ENCODE measurements at regions of chr7 and their contacts with region 1.

Region 1: DNA sequence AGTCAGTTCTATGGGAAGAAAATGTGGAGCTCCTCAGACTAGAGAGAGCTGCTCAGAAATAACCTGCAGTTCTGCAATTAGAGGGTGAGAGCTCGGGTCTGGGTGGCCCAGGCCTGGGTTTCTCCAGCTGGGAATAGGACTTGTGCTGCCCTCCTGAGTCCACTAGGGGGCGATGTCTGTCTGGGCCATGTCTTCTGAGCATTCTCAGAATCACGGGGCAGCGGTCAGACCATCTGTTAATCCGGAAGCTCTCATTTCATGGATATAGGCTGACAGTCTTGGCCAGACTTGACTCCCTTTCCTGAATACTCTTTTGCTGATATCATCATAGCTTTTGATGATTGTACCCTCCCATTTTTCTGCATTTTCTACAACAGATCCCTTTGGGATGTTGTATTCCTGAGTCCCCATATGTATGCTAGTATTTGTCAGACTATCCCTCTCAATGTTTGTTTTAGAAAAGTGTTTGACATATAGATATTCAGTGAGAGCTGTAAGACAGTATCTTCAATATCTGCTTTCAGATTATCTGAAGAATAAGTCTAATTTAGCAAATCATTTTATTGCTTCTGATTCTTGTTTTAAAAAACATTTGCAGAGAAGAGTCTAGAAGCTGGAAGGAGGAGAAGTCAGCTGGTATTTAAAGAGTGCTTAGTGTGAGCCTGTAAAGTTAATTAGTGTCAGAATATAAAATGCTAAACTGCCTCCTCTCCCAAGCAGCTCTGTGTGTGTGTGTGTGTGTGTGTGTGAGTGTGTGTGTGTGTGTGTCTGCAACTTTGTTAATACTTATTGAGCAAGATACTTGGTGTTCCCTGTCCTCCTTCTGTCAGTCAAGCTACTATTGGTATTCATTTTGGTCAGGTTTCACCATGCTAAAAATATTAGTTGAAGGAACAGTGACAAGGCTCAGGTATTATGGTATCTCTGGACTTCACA is 38.0 kb downstream of the STARD3NL start:
- DNase-seq: peak; percentile 75
- H3K4me3 Mint-ChIP-seq: no peak overlapping the region
- H3K27ac Mint-ChIP-seq: no peak overlapping the region
- H3K4me1 Mint-ChIP-seq: no peaks in the 10 kb centered on the region
- H3K27me3 Mint-ChIP-seq: no peaks in the 10 kb centered on the region
- CTCF ChIP-seq: peak; percentile 92

Region 2: GRCh38 chr7:37901236-37901827 is 314.7 kb before region 1 on chr7:
- CTCF ChIA-PET with region 1: interaction called, 48 read pairs
- POLR2A ChIA-PET with region 1: no interaction called
- intact Hi-C with region 1: no loop called
- DNase-seq: peak; percentile 53
- H3K4me3 Mint-ChIP-seq: no peak overlapping the region
- H3K27ac Mint-ChIP-seq: no peak overlapping the region
- H3K4me1 Mint-ChIP-seq: no peaks in the 10 kb centered on the region
- H3K27me3 Mint-ChIP-seq: peaks cover 35% of the 10 kb centered on the region
- CTCF ChIP-seq: peak; percentile 44

Region 3: DNA sequence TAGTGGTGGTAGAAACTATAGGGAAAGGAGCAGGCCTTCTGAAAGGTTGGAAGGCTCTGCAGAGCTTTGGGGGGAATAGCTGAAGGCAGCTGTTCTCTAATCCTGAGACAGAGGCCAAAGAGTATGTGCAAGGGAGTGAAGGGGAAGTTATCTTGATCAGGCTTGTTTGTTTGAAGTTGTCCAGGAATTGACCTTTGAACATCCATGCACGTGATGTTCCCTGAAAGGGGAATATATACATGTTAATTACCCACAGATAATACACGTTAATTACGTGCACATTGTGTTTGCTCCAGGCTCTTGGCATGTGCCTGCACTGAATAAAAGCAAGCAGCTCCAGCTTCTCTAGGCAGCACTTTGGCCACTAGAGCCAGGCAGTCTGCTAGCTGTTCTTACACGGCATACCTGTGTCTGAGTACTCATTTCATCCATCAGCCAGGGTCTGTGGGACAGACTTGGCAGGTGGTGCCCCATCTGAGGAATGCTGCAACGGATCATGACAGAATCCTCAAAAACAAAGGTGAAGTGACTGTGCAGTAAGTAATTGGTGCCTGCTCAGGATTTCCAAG is 55.9 kb before region 1 on chr7:
- CTCF ChIA-PET with region 1: interaction called, 14 read pairs
- POLR2A ChIA-PET with region 1: no interaction called
- intact Hi-C with region 1: no loop called
- DNase-seq: no peak
- H3K4me3 Mint-ChIP-seq: no peak overlapping the region
- H3K27ac Mint-ChIP-seq: no peak overlapping the region
- H3K4me1 Mint-ChIP-seq: no peaks in the 10 kb centered on the region
- H3K27me3 Mint-ChIP-seq: peaks cover 20% of the 10 kb centered on the region
- CTCF ChIP-seq: no peak

Region 4: GRCh38 chr7:38195804-38196595 is 20.0 kb before region 1 on chr7:
- CTCF ChIA-PET with region 1: interaction called, 55 read pairs
- POLR2A ChIA-PET with region 1: interaction called, 7 read pairs
- intact Hi-C with region 1: no loop called
- DNase-seq: peak; percentile 55
- H3K4me3 Mint-ChIP-seq: peak overlapping the region; percentile 62
- H3K27ac Mint-ChIP-seq: peak overlapping the region; percentile 97
- H3K4me1 Mint-ChIP-seq: peaks cover 22% of the 10 kb centered on the region
- H3K27me3 Mint-ChIP-seq: no peaks in the 10 kb centered on the region
- CTCF ChIP-seq: no peak

Region 5: DNA sequence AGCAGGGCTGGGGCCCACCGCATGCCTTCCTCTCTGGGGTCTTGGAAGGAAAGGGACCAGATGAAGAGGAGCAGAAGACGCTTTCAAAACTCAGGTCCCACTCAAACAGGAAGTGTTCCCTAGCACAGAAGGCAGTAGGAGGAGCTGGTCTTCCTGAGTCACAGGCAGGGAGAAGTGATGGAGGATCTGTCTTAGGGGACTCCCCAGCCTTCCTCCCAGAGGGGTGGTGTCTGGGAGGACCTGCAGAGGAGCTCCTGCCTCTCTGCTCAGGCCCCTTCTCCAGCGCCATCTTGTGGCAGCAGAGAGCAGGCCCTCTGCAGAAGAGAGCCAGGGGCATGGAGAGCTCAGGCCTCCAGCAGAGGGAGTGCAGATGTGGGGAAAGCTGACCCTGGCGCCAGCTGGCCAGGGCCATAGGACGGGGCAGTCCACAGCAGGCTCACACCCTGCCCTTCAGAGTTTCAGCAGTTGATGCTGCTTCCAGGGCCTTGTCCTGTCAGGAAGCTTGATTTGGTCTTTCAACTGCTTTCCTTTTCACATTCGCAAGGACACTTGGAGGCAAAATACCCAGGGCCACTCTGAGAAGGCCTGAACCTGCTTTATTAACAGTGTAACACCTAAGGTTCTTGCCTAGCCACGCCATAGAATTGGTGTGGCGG is 119.6 kb after region 1 on chr7:
- CTCF ChIA-PET with region 1: interaction called, 15 read pairs
- POLR2A ChIA-PET with region 1: no interaction called
- intact Hi-C with region 1: no loop called
- DNase-seq: peak; percentile 87
- H3K4me3 Mint-ChIP-seq: no peak overlapping the region
- H3K27ac Mint-ChIP-seq: no peak overlapping the region
- H3K4me1 Mint-ChIP-seq: no peaks in the 10 kb centered on the region
- H3K27me3 Mint-ChIP-seq: peaks cover 13% of the 10 kb centered on the region
- CTCF ChIP-seq: peak; percentile 81